ENCODE measurements at regions of chr18 and their contacts with region 1.

Region 1: DNA sequence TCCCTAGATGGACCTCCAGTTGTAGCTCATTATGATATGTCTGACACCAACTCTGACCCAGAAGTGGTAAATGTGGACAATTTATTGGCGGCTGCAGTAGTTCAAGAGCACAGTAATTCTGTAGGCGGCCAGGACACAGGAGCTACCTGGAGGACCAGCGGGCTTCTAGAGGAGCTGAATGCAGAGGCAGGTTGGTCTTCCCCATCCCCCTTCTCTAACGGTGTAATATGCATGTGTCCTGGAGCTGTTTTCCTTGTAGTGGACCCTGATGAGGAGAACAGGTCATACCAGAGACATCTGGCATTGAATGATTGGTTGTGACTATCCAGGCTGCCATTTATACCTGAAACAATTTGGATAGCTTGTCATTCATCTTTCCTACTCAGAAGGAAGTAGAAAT is 135.8 kb downstream of the HAUS1 start:
- DNase-seq: no peak
- H3K4me3 Mint-ChIP-seq: no peak overlapping the region
- H3K27ac Mint-ChIP-seq: peak overlapping the region; percentile 4
- H3K4me1 Mint-ChIP-seq: peaks cover 18% of the 10 kb centered on the region
- H3K27me3 Mint-ChIP-seq: no peaks in the 10 kb centered on the region

Region 2: DNA sequence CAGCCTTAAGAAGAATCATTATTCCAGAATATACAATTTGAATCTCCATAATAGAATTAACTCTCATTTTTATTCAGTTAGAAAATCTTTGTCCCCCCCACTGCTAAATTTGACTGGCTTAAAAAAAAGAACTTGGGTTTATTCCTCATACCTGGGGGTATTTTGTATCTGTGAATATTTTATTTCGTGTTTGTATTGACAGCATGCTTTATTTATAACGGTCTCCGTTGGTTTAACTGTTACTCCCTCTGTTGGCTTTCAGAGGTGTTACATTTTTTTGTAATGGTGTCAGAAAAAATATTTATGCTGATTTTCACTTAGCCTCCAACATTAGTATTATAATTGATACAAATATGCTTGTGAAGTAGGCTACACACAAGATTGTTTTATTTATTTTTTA is 26.7 kb before region 1 on chr18:
- CTCF ChIA-PET with region 1: no interaction called
- POLR2A ChIA-PET with region 1: interaction called, 11 read pairs
- DNase-seq: no peak
- H3K4me3 Mint-ChIP-seq: no peak overlapping the region
- H3K27ac Mint-ChIP-seq: no peak overlapping the region
- H3K4me1 Mint-ChIP-seq: peaks cover 74% of the 10 kb centered on the region
- H3K27me3 Mint-ChIP-seq: no peaks in the 10 kb centered on the region